Right cardiac atrium (tissue), 5 donors: ENCODE measurements at regions of chr7 and their contacts with region 1.

Region 1: GRCh38 chr7:985915-986741 is 3.1 kb downstream of the CYP2W1 start:
- DNase-seq: peak in 1 of 3 donors; percentile 60
- ATAC-seq: peak in 1 of 2 donors; percentile 5
- H3K4me3 ChIP-seq: no peak overlapping the region
- H3K27ac ChIP-seq: no peak overlapping the region
- H3K4me1 ChIP-seq: no peaks in the 10 kb centered on the region
- H3K27me3 ChIP-seq: no peaks in the 10 kb centered on the region

Region 2: DNA sequence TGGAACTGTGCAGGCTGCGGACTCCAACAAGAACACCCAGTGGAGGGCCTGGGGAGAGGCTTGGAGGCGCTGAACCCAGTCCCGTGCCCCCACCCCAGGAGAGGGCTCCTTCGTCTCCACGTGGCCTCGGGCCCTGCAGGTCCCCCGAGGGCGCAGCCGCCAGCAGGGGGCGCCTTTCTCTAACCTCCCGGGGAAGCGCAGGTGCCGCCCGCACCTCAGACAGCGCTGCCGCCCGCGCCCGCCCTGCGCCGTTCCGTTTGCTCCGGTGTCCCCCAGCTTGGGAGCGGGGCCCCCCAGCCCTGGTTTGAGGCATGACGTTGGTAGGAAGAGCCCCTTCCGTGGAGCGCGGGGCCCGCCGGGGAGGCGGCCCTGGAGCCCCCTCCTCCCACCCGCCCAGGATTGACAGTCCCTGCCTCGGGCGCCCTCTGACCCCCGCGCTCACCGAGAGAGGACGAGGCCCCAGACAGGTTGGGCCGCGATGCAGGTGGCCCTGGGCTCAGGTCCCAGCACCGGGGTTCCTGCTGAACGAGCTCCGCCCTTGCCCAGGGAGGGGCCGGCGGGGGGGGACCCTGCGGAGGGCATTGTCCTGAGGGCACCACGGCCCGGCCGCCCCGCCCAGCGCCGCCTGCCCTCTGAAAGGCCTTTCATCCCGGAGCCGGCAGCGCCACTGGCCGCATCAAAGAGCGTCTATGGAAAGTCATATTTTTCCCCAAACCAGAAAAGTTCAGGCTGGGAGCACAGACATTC is 653.3 kb before region 1 on chr7:
- intact Hi-C with region 1: no loop called
- DNase-seq: peak; percentile 80 to 94 (median 93)
- ATAC-seq: peak; percentile 92 to 93
- H3K4me3 ChIP-seq: peak overlapping the region; percentile 45
- H3K27ac ChIP-seq: peak overlapping the region; percentile 65
- H3K4me1 ChIP-seq: no peaks in the 10 kb centered on the region
- H3K27me3 ChIP-seq: no peaks in the 10 kb centered on the region

Region 3: DNA sequence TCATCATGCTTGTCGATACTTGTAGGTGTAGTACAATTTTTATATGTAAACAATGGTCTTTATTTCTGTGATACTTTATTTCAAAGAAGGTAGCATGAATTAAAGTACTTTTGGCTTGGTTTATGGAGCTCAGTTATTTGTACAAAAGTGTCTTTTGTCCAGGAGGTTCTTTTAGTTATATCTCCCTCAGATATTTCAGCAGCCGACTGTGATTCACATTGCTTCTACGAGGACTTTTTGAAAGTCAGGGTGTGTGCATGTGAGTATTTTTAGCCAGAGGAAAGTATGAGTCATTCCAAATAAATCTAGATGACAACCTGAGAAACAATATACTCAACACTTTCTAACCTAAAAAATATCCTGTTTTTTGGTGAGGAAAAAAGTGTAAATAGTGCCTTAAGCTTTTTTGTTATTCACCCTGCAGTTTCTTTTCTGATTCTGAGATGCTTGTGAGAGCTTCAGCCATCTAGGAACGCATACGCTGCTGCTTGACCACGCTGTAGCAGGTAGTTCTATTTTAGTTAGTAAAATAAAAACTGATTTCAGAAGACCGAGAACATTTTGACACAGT is 154.4 kb before region 1 on chr7:
- intact Hi-C with region 1: no loop called
- DNase-seq: no peak
- ATAC-seq: peak; percentile 68 to 81
- H3K4me3 ChIP-seq: peak overlapping the region; percentile 1
- H3K27ac ChIP-seq: peak overlapping the region; percentile 58
- H3K4me1 ChIP-seq: peaks cover 20% of the 10 kb centered on the region
- H3K27me3 ChIP-seq: no peaks in the 10 kb centered on the region

Region 4: GRCh38 chr7:1144269-1144771 is 158.2 kb after region 1 on chr7:
- intact Hi-C with region 1: loop called in 1 of 4 experiments (anchors 10 kb)
- DNase-seq: peak; percentile 42 to 79 (median 74)
- ATAC-seq: peak; percentile 65 to 88
- H3K4me3 ChIP-seq: no peak overlapping the region
- H3K27ac ChIP-seq: no peak overlapping the region
- H3K4me1 ChIP-seq: no peaks in the 10 kb centered on the region
- H3K27me3 ChIP-seq: no peaks in the 10 kb centered on the region

Region 5: DNA sequence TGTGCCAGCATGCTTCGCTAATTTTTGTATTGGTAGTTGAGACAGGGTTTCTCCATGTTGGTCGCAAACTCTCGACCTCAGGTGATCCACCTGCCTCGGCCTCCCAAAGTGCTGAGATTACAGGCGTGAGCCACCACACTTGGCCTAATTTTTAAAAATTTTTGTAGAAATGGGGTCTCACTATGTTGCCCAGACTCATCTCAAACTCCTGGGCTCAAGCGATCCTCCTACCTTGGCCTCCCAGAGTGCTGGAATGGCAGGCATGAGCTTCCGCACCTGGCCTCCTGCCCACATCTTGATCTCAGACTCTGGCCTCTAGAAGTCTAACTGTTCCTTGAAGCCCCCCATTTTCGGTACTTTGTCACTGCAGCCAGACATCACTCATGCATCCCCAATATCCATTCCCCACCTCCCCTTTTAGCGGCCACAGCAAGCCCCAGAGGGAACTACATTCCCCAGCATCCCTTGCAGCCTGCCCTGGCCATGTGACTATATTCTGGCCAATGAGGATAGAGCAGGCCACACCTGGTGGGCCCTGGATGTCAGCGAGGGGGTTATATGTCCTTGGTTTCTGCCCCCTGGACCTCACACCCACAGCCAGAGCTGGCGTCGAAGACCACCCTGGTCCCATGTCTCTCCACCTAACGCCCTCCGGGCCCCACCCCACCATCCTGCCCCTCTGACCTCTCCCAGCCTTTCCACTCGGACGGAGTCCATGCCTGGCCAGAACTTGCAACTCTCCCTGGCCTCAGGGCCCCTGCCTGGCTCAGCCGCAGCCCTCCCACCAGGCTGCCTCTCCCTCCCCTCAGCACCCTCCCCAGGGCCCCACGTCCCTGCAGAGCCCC is 439.4 kb after region 1 on chr7:
- intact Hi-C with region 1: no loop called
- DNase-seq: no peak
- ATAC-seq: no peak
- H3K4me3 ChIP-seq: no peak overlapping the region
- H3K27ac ChIP-seq: no peak overlapping the region
- H3K4me1 ChIP-seq: no peaks in the 10 kb centered on the region
- H3K27me3 ChIP-seq: no peaks in the 10 kb centered on the region